ENCODE measurements at regions of chr10 and their contacts with region 1.

Region 1: DNA sequence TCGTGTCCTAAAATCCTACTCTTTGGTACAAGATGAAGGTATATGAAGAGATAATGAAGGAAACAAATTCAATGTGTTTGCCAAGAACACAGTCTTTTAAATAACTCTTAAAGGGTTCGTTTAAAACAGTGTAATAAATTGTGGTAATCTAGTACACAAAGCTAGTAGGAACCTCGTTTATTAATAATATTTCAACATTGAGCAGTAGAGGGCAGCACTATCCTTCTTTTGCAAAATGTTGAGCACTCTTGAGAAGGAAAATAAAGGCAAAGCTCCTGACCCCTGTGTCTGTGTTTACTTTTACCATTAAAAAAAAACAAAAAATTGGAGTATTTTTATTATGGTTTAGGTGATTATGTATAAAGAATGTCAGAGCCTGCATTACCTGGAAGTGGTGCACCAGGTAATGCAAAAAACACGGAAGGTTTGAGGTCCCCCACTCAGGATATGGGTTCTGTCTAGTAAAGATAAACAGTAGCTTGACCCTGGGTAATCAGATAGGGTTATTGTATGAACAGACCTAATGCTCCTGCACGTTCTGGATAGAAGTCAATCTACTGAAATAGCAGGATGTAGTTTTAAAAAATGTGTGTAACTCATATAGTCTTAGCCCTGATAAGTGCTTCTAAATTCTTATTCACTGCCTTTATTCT is 5.7 kb upstream of the GOT1 start:
- DNase-seq: no peak
- ATAC-seq: peak; percentile 65
- H3K4me3 Mint-ChIP-seq: no peak overlapping the region
- H3K27ac Mint-ChIP-seq: no peak overlapping the region
- H3K4me1 Mint-ChIP-seq: peaks cover 4% of the 10 kb centered on the region
- H3K27me3 Mint-ChIP-seq: no peaks in the 10 kb centered on the region
- CTCF ChIP-seq: peak; percentile 34

Region 2: GRCh38 chr10:98916526-98917120 is 519.5 kb before region 1 on chr10:
- CTCF ChIA-PET with region 1: no interaction called
- POLR2A ChIA-PET with region 1: no interaction called
- DNase-seq: no peak
- ATAC-seq: peak; percentile 43; the same call in 1 of the 2 replicates
- H3K4me3 Mint-ChIP-seq: no peak overlapping the region
- H3K27ac Mint-ChIP-seq: no peak overlapping the region
- H3K4me1 Mint-ChIP-seq: peaks cover 15% of the 10 kb centered on the region
- H3K27me3 Mint-ChIP-seq: no peaks in the 10 kb centered on the region
- CTCF ChIP-seq: no peak

Region 3: DNA sequence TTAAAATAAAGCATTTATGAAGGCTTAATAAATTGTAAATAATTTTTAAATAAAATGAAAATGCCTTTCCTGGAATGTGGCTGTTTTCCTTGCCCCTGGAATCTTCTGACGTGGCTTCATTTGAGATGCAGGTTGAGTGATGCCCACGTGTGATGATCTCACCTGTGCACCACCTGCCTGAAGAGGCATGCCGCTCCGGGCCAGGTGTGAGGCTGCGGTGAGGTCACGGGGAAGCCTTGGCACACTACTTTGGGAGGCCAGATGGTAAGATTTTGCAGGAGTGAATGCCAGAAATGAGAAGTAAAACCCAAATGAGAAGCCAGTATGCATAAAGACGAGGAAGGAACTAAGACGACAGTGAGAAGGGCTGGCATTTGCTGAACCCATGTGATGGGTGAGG is 41.9 kb before region 1 on chr10:
- CTCF ChIA-PET with region 1: interaction called, 15 read pairs
- POLR2A ChIA-PET with region 1: interaction called, 5 read pairs
- DNase-seq: no peak
- ATAC-seq: no peak
- H3K4me3 Mint-ChIP-seq: peak overlapping the region; percentile 37
- H3K27ac Mint-ChIP-seq: no peak overlapping the region
- H3K4me1 Mint-ChIP-seq: peaks cover 46% of the 10 kb centered on the region
- H3K27me3 Mint-ChIP-seq: no peaks in the 10 kb centered on the region
- CTCF ChIP-seq: no peak

Region 4: GRCh38 chr10:99470327-99470726 is 34.2 kb after region 1 on chr10:
- CTCF ChIA-PET with region 1: interaction called, 11 read pairs
- POLR2A ChIA-PET with region 1: no interaction called
- DNase-seq: no peak
- ATAC-seq: no peak
- H3K4me3 Mint-ChIP-seq: no peak overlapping the region
- H3K27ac Mint-ChIP-seq: no peak overlapping the region
- H3K4me1 Mint-ChIP-seq: peaks cover 3% of the 10 kb centered on the region; the same call in 1 of the 2 replicates
- H3K27me3 Mint-ChIP-seq: no peaks in the 10 kb centered on the region; the same call in none of the 2 replicates
- CTCF ChIP-seq: no peak

Region 5: GRCh38 chr10:99506416-99506815 is 70.3 kb after region 1 on chr10:
- CTCF ChIA-PET with region 1: interaction called, 13 read pairs
- POLR2A ChIA-PET with region 1: no interaction called
- DNase-seq: no peak
- ATAC-seq: no peak
- H3K4me3 Mint-ChIP-seq: no peak overlapping the region
- H3K27ac Mint-ChIP-seq: no peak overlapping the region
- H3K4me1 Mint-ChIP-seq: no peaks in the 10 kb centered on the region
- H3K27me3 Mint-ChIP-seq: peaks cover 72% of the 10 kb centered on the region
- CTCF ChIP-seq: no peak

Region 6: DNA sequence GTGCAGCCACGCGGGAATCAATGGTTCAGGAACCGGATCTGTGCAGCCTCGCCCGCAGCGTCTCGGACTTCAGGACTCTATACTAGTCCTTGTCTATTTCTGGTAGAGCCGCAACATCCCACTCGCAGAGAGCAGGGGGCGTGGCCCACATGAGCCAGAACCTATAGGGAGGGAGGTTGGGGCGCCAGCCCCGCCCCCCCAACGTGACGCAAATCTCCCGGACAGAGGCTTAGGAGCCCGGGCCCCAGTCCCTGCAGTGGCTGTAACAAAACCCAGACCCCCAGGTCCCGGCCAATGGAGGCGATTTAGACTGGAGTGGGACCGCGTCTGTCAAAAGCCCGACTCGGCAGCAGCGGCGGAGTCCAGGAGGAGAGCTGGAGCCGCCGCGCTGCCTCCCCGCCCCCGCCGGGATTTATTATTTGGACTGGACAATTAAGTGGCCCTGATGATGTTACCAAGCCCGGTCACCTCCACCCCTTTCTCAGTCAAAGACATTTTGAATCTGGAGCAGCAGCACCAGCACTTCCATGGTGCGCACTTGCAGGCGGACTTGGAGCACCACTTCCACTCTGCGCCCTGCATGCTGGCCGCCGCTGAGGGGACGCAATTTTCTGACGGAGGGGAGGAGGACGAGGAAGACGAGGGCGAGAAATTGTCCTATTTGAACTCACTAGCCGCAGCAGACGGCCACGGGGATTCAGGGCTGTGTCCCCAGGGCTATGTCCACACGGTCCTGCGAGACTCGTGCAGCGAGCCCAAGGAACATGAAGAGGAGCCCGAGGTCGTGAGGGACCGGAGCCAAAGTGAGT is 96.8 kb after region 1 on chr10 and contains the start of gene NKX2-3:
- CTCF ChIA-PET with region 1: interaction called, 17 read pairs
- POLR2A ChIA-PET with region 1: interaction called, 3 read pairs
- DNase-seq: peak; percentile 92
- ATAC-seq: peak; percentile 53
- H3K4me3 Mint-ChIP-seq: peak within 1 kb of the TSS; percentile 60
- H3K27ac Mint-ChIP-seq: no peak within 1 kb of the TSS
- H3K4me1 Mint-ChIP-seq: peaks cover 72% of the 10 kb centered on the region
- H3K27me3 Mint-ChIP-seq: peaks cover 100% of the 10 kb centered on the region
- CTCF ChIP-seq: no peak
- total RNA-seq, gene NKX2-3: not detected in 3 replicates

Region 7: GRCh38 chr10:99560277-99561126 is 124.4 kb after region 1 on chr10:
- CTCF ChIA-PET with region 1: interaction called, 13 read pairs
- POLR2A ChIA-PET with region 1: no interaction called
- DNase-seq: peak; percentile 76
- ATAC-seq: peak; percentile 91
- H3K4me3 Mint-ChIP-seq: no peak overlapping the region
- H3K27ac Mint-ChIP-seq: no peak overlapping the region
- H3K4me1 Mint-ChIP-seq: peaks cover 13% of the 10 kb centered on the region
- H3K27me3 Mint-ChIP-seq: no peaks in the 10 kb centered on the region
- CTCF ChIP-seq: peak; percentile 93

Region 8: GRCh38 chr10:99659031-99659867 is 223.1 kb after region 1 on chr10 and contains the start of gene ENTPD7:
- CTCF ChIA-PET with region 1: interaction called, 10 read pairs
- POLR2A ChIA-PET with region 1: no interaction called
- DNase-seq: peak; percentile 97
- ATAC-seq: peak; percentile 99
- H3K4me3 Mint-ChIP-seq: peak within 1 kb of the TSS; percentile 92
- H3K27ac Mint-ChIP-seq: peak within 1 kb of the TSS; percentile 73
- H3K4me1 Mint-ChIP-seq: peaks cover 18% of the 10 kb centered on the region
- H3K27me3 Mint-ChIP-seq: peaks cover 31% of the 10 kb centered on the region
- CTCF ChIP-seq: no peak
- total RNA-seq, gene ENTPD7: 10.2 to 11.4 TPM (median 11.2 TPM) in 3 replicates

Measured in WTC11 (cell line).